ENCODE measurements at regions of chr1 and their contacts with region 1.

Region 1: GRCh38 chr1:32321712-32322291 is 14.2 kb downstream of the MARCKSL1 start:
- DNase-seq: no peak
- ATAC-seq: peak; percentile 47
- H3K4me3 Mint-ChIP-seq: peak overlapping the region; percentile 68
- H3K27ac Mint-ChIP-seq: peak overlapping the region; percentile 89
- H3K4me1 Mint-ChIP-seq: peaks cover 71% of the 10 kb centered on the region
- H3K27me3 Mint-ChIP-seq: no peaks in the 10 kb centered on the region
- CTCF ChIP-seq: no peak

Region 2: GRCh38 chr1:32221980-32222755 is 99.6 kb before region 1 on chr1 and contains the starts of genes EIF3I and TMEM234:
- CTCF ChIA-PET with region 1: interaction called, 51 read pairs
- POLR2A ChIA-PET with region 1: interaction called, 10 read pairs
- intact Hi-C with region 1: no loop called
- DNase-seq: peak; percentile 80
- ATAC-seq: peak; percentile 85
- H3K4me3 Mint-ChIP-seq: peak within 1 kb of the TSS; percentile 96
- H3K27ac Mint-ChIP-seq: peak within 1 kb of the TSS; percentile 95
- H3K4me1 Mint-ChIP-seq: peaks cover 50% of the 10 kb centered on the region
- H3K27me3 Mint-ChIP-seq: no peaks in the 10 kb centered on the region
- CTCF ChIP-seq: no peak
- total RNA-seq, gene EIF3I: 196 and 213 TPM in 2 replicates
- total RNA-seq, gene TMEM234: 31.8 and 35.5 TPM in 2 replicates

Region 3: DNA sequence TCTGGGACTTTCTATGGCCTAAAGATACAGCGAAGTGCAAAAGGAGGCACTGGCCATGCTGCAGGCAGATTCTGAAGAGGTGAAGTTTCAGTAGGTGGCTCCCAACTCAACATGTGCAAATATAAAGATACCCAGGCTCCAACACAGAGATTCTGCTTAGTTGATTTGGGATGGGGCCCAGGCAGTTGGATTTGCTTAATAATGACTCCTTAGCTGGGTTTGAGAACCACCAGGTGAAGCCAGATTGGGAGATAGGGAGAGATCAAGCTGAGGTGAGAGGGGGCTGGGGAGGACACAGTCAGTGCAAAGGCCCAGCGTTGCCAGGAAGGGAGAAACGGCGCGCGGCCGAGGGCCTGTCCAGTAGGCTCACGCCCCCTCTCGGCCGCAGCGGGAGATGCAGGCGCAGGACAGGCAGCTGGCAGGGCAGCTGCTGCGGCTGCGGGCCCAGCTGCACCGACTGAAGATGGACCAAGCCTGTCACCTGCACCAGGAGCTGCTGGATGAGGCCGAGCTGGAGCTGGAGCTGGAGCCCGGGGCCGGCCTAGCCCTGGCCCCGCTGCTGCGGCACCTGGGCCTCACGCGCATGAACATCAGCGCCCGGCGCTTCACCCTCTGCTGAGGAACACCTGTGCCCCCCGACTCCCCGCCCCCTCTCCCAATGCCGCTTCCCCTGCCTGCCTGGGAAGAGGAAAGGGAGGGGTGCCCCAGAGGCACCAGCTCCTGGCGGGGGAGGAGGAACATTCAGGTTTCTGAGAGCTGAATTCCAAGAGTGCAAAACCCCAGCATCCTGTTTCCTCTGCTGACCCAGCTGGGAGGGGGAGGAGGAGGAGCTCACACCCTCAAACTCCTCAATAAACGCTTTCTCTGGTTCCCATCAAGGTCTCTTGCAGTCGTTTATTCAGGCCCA is 73.6 kb before region 1 on chr1:
- CTCF ChIA-PET with region 1: interaction called, 23 read pairs
- POLR2A ChIA-PET with region 1: interaction called, 22 read pairs
- intact Hi-C with region 1: loop called (anchors 2 kb)
- DNase-seq: peak; percentile 71
- ATAC-seq: peak; percentile 13
- H3K4me3 Mint-ChIP-seq: peak overlapping the region; percentile 45
- H3K27ac Mint-ChIP-seq: peak overlapping the region; percentile 81
- H3K4me1 Mint-ChIP-seq: peaks cover 70% of the 10 kb centered on the region
- H3K27me3 Mint-ChIP-seq: no peaks in the 10 kb centered on the region
- CTCF ChIP-seq: no peak

Region 4: GRCh38 chr1:32361674-32362473 is 40.1 kb after region 1 on chr1:
- CTCF ChIA-PET with region 1: interaction called, 4 read pairs
- POLR2A ChIA-PET with region 1: interaction called, 7 read pairs
- intact Hi-C with region 1: loop called (anchors 5 kb)
- DNase-seq: peak; percentile 46
- ATAC-seq: peak; percentile 38
- H3K4me3 Mint-ChIP-seq: peak overlapping the region; percentile 58
- H3K27ac Mint-ChIP-seq: peak overlapping the region; percentile 65
- H3K4me1 Mint-ChIP-seq: peaks cover 31% of the 10 kb centered on the region
- H3K27me3 Mint-ChIP-seq: no peaks in the 10 kb centered on the region
- CTCF ChIP-seq: no peak

Region 5: DNA sequence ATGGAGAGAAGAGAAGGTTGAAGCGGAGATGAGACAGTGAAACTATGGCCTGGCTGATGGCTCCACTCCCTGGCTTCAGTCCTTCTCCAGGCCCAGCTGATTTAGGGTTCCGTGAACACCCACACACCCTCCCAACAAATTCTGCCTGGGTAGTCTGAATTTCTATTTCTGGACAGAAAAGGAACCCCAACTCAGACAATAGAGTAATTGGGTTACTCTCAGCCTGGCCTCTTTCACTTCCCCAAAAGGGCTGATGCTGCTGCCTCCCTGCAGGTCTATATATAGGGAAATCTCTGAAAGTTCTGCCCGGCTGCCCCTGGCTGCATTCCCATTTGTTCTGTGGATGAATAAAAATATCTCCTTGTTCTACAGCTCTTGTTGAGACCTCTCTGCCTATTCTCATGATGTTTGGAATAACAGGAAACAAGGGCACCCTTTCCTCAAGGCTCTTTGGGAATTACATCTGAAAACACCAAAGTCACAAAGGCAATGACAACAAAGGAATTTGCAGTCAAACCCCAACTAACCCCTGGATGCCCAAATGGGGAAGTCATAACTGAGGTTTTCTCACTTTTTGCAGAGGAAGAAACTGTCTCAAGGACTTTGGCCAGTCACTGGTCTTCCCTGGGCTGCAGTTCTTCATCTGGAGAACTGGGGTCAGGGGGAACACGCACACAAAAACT is 1139.3 kb after region 1 on chr1:
- CTCF ChIA-PET with region 1: no interaction called
- POLR2A ChIA-PET with region 1: no interaction called
- intact Hi-C with region 1: no loop called
- DNase-seq: no peak
- ATAC-seq: peak; percentile 92
- H3K4me3 Mint-ChIP-seq: peak overlapping the region; percentile 76
- H3K27ac Mint-ChIP-seq: peak overlapping the region; percentile 75
- H3K4me1 Mint-ChIP-seq: peaks cover 49% of the 10 kb centered on the region
- H3K27me3 Mint-ChIP-seq: no peaks in the 10 kb centered on the region
- CTCF ChIP-seq: no peak

Measured in activated B cell treated with CpG ODN at 0.5 μM for 24 hours (primary cell).